Gastrocnemius medialis (tissue), 4 donors: ENCODE measurements at regions of chr17 and their contacts with region 1.

Region 1: GRCh38 chr17:68318103-68318991 is 27.1 kb downstream of the ARSG start:
- DNase-seq: peak; percentile 90 to 93
- ATAC-seq: peak; percentile 83
- H3K4me3 ChIP-seq: no peak overlapping the region
- H3K27ac ChIP-seq: peak overlapping the region; percentile 94 to 99 (median 95)
- H3K4me1 ChIP-seq: peaks cover 46 to 51% of the 10 kb centered on the region in 2 donors
- H3K27me3 ChIP-seq: no peaks in the 10 kb centered on the region
- CTCF ChIP-seq: peak in 1 of 5 experiments; percentile 8
- POLR2A ChIP-seq: peak; percentile 31 to 50

Region 2: GRCh38 chr17:67717624-67718329 is 600.6 kb before region 1 on chr17 and contains the start of gene NOL11:
- in situ Hi-C with region 1: no loop called
- intact Hi-C with region 1: no loop called
- DNase-seq: peak; percentile 97 to 98
- ATAC-seq: peak; percentile 98
- H3K4me3 ChIP-seq: peak within 1 kb of the TSS; percentile 68 to 98 (median 78)
- H3K27ac ChIP-seq: peak within 1 kb of the TSS; percentile 83 to 92 (median 86)
- H3K4me1 ChIP-seq: peaks cover 20 to 23% of the 10 kb centered on the region in 2 donors
- H3K27me3 ChIP-seq: no peaks in the 10 kb centered on the region
- CTCF ChIP-seq: peak; percentile 89 to 98 (median 93)
- POLR2A ChIP-seq: peak; percentile 63 to 71
- total RNA-seq, gene NOL11: 22.2 to 40.9 (median 36.4) TPM

Region 3: GRCh38 chr17:68102318-68102758 is 216.0 kb before region 1 on chr17:
- in situ Hi-C with region 1: no loop called
- intact Hi-C with region 1: no loop called
- DNase-seq: peak in 1 of 2 donors; percentile 5
- ATAC-seq: peak; percentile 27 to 32
- H3K4me3 ChIP-seq: peak overlapping the region; percentile 79 to 99 (median 82)
- H3K27ac ChIP-seq: peak overlapping the region; percentile 86 to 97 (median 91)
- H3K4me1 ChIP-seq: peaks cover 13 to 14% of the 10 kb centered on the region in 2 donors
- H3K27me3 ChIP-seq: no peaks in the 10 kb centered on the region
- CTCF ChIP-seq: no peak
- POLR2A ChIP-seq: no peak

Region 4: DNA sequence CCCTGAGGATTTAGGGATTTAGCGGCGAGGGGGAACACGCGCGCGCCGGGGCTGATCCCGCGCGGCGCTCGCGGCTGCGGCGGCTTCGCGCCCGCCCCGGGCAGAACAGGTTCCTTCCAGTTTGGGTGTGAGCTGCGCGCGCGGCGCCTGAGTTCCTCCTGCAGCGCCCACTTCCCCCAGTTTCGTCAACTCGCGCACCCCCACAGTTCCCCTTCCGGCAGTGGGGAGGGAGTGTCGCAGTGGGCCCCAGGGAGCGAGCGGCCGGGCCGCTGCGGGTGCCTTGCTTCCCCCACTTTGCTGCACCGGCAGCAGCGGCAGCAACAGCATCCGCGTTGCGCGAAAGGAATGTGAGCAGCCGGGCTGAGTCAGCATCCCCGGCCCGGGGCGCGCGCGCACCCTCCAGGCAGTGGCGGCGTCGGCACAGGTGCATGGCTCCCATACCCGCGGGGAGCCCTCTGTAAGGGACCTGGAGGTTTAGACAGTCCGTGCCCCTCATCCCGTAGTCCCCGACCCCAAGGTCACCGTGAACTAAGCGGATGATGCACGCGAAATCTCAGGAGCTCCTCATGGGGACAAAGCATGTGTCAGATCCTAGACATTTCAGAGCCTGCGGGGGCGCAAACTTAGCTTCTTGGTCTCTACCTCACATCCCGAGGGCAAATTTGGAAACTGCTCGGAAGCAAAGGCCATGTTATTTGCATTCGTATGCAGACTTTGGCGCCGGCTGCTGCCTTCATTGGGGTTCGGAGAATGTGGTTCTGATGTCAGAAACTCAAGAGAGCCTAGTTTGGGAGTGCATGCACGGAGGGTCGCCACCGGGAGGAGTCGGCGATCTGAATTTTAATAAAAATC is 26.3 kb before region 1 on chr17:
- in situ Hi-C with region 1: no loop called
- intact Hi-C with region 1: loop called (anchors 1 kb)
- DNase-seq: peak; percentile 47 to 71
- ATAC-seq: peak; percentile 59 to 65
- H3K4me3 ChIP-seq: peak overlapping the region; percentile 64 to 81 (median 71)
- H3K27ac ChIP-seq: peak overlapping the region; percentile 78 to 89 (median 88)
- H3K4me1 ChIP-seq: peaks cover 13 to 24% of the 10 kb centered on the region in 2 donors
- H3K27me3 ChIP-seq: no peaks in the 10 kb centered on the region
- CTCF ChIP-seq: peak in 1 of 5 experiments; percentile 27
- POLR2A ChIP-seq: peak; percentile 49 to 65

Region 5: GRCh38 chr17:68386240-68387087 is 68.1 kb after region 1 on chr17:
- in situ Hi-C with region 1: no loop called
- intact Hi-C with region 1: no loop called
- DNase-seq: peak; percentile 78 to 93
- ATAC-seq: peak; percentile 87 to 91
- H3K4me3 ChIP-seq: no peak overlapping the region
- H3K27ac ChIP-seq: peak overlapping the region; percentile 77 to 98 (median 80)
- H3K4me1 ChIP-seq: peaks cover 14 to 43% of the 10 kb centered on the region in 2 donors
- H3K27me3 ChIP-seq: no peaks in the 10 kb centered on the region
- CTCF ChIP-seq: no peak
- POLR2A ChIP-seq: peak; percentile 28 to 57

Region 6: GRCh38 chr17:68519911-68520310 is 201.6 kb after region 1 on chr17:
- in situ Hi-C with region 1: no loop called
- intact Hi-C with region 1: loop called (anchors 2 kb)
- DNase-seq: peak; percentile 70 to 82
- ATAC-seq: peak; percentile 92
- H3K4me3 ChIP-seq: peak overlapping the region in 1 of 4 donors; percentile 4
- H3K27ac ChIP-seq: peak overlapping the region; percentile 94 to 99 (median 96)
- H3K4me1 ChIP-seq: peaks cover 57 to 75% of the 10 kb centered on the region in 2 donors
- H3K27me3 ChIP-seq: no peaks in the 10 kb centered on the region
- CTCF ChIP-seq: no peak
- POLR2A ChIP-seq: peak in 1 of 2 donors; percentile 67